MCF 10A (cell line): ENCODE measurements at regions of chr17 and their contacts with region 1.

Region 1: DNA sequence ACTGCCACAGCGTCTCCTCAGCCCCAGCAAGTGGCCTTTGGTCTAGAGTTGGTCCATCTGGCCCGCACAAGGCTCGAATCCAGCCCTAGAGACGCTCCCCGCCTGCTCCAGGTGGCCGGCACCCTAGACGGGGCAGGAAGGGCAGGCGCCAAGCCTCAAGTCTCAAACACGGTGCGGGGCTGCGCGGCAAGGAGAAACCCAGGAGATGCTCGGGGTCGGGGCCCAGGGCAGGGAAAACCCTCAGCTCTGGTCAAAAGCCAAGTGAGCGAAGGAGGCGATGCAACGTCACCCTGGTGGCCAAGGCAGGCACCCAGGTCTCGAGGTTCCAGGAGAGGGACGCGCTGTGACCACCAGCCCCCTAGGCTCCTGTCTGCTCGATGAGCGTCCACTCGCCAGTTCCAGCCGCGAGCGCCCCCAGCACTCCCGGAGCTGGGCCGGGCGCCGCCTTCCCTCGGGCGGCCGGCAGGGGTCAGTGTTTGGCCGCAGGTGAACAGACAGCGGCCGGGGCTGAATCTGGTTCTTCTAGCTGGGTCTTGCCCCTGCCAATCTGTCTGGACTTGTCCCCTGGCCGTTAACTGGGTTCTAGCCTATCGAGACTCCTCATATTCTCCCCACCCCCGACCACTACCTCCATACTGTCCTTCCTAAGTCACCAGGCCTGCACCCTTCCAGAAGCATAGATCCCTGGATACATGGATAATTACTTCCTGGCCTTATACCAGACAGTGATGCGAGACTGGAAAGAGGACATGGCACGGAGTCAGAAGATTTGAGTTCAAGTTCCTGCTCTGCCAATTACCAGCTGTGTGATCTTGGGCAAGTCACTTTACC is 44.0 kb downstream of the PRAC1 start:
- DNase-seq: peak; percentile 72
- H3K4me3 Mint-ChIP-seq: no peak overlapping the region
- H3K27ac Mint-ChIP-seq: no peak overlapping the region
- H3K4me1 Mint-ChIP-seq: peaks cover 4% of the 10 kb centered on the region
- H3K27me3 Mint-ChIP-seq: peaks cover 19% of the 10 kb centered on the region
- CTCF ChIP-seq: peak; percentile 96

Region 2: GRCh38 chr17:48711102-48711501 is 32.7 kb after region 1 on chr17:
- CTCF ChIA-PET with region 1: interaction called, 11 read pairs
- POLR2A ChIA-PET with region 1: no interaction called
- intact Hi-C with region 1: no loop called
- DNase-seq: no peak
- H3K4me3 Mint-ChIP-seq: no peak overlapping the region
- H3K27ac Mint-ChIP-seq: no peak overlapping the region
- H3K4me1 Mint-ChIP-seq: no peaks in the 10 kb centered on the region
- H3K27me3 Mint-ChIP-seq: peaks cover 79% of the 10 kb centered on the region
- CTCF ChIP-seq: no peak

Region 3: DNA sequence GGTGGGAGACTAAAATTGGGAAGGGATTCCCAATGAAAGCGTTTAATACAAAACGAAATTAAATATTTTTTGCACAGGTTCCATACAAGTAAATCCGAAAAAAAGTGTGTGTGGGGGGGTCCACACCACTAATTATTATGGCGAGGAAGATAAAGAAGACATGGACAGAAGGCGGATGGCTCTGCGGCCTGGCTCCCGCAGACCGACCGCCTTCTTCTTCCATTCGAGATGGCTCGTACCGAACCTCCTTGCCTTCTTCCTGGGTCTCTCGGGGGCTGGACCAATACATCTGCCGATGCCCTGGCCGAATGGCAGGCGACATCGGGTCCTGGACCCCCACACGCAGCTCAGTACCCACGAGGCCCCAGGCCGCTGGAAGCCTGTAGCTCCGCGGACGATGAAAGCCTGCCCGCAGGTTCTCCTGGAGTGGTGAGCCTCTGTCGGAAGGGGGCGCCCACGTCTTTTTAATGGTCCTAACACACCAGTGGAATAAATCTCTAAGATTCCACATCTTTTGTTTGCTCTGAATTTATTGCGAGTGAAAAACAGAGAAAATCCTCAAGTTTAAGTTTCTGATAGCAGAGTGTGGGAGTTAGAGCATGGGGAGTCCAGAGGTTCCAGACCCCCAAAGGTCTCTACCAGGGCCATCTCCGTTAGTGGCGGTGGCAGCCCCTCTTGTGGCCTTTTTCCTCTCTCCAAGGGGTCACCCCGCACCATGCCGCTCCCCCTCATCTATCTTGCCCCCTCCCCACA is 46.1 kb after region 1 on chr17:
- CTCF ChIA-PET with region 1: interaction called, 26 read pairs
- POLR2A ChIA-PET with region 1: interaction called, 4 read pairs
- intact Hi-C with region 1: no loop called
- DNase-seq: peak; percentile 78
- H3K4me3 Mint-ChIP-seq: peak overlapping the region; percentile 17
- H3K27ac Mint-ChIP-seq: no peak overlapping the region
- H3K4me1 Mint-ChIP-seq: peaks cover 11% of the 10 kb centered on the region
- H3K27me3 Mint-ChIP-seq: peaks cover 56% of the 10 kb centered on the region
- CTCF ChIP-seq: peak; percentile 74

Region 4: DNA sequence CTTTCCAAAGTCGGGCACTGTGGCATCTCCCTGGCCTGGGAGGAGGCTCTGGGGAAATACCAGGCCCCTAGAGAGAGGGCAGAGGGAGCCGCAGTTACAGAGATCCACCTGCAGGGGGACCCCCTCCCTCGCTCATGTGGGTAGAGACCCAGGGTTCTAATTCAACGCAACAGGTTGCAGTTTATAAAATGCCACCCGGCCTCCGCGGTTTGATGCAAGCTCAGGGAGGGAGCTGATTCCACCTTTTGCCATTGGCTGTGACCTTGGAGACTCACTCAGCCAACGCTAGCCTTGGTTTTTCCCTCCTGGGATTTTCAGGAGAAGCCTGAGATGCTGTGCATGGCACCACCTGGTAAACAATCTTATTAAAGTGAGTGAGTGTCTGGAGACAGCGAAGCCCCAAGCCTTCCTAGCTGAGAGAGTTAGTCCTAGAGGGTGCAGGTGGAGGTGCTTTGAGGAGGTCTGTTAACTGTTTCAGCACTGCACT is 126.6 kb after region 1 on chr17:
- CTCF ChIA-PET with region 1: interaction called, 24 read pairs
- POLR2A ChIA-PET with region 1: no interaction called
- intact Hi-C with region 1: no loop called
- DNase-seq: peak; percentile 67
- H3K4me3 Mint-ChIP-seq: no peak overlapping the region
- H3K27ac Mint-ChIP-seq: no peak overlapping the region
- H3K4me1 Mint-ChIP-seq: peaks cover 4% of the 10 kb centered on the region
- H3K27me3 Mint-ChIP-seq: peaks cover 11% of the 10 kb centered on the region
- CTCF ChIP-seq: peak; percentile 89

Region 5: DNA sequence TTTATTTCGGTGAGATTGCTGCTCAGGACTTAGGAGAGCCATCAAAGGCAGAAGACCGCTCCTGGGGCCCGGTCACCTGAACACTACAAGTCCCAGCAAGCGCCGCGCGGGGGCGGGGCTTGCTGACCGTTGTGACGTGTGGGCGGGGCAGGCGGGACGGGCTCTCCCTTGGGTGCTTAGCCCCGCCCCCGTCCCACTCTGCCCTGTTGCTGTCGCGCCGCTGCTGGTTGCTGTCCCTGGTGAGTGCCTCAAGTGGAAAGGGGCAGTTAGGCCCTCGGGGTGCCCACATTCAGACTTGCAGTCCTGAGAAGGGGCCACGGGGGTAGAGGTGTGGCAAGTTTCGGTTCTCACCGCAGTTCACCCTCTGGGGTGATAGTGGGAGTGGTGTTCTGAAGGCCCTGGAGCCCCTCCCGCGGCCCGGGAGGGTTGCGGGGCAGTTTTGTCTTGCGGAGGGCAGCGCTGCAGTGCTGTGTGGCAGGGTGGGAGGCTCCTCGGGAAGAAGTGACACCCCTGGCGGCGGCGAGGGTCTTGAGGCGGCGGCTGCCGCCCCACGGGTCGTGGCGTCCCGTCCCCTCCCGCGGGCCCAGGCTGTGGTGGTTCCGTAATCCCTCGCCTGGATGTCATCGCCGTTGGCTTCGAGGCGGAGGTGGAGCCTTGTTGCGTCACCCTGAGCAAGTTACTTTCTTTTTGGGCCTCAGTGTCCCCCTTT is 152.6 kb after region 1 on chr17 and contains the start of gene CALCOCO2:
- CTCF ChIA-PET with region 1: no interaction called
- POLR2A ChIA-PET with region 1: no interaction called
- intact Hi-C with region 1: no loop called
- DNase-seq: peak; percentile 95
- H3K4me3 Mint-ChIP-seq: peak within 1 kb of the TSS; percentile 94
- H3K27ac Mint-ChIP-seq: peak within 1 kb of the TSS; percentile 96
- H3K4me1 Mint-ChIP-seq: no peaks in the 10 kb centered on the region
- H3K27me3 Mint-ChIP-seq: no peaks in the 10 kb centered on the region
- CTCF ChIP-seq: no peak
- total RNA-seq, gene CALCOCO2: 96.1 and 113 TPM in 2 replicates